Endothelial cell of umbilical vein (primary cell): ENCODE measurements at regions of chr19 and their contacts with region 1.

Region 1: DNA sequence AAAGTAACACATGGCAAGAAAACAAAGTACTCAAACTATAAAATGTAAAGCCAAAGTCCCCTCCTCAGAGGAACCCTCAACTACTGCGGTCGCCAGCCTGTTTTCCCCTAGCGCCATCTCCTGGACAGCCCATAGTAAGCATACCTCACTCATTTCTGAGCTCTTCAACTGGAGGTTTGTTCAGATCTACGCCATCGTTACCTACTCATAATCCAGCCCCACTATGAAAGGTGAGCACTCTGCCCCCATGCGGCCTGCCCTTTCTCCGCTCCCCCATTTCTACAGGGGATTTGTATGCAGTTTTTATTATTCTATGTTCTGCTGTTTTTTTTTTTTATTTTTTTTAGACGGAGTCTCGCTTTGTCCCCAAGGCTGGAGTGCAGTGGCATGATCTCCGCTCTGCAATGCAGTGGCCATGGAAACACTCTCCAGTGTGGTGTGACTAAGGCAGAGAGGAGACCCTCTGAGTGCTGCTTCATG is 26.2 kb downstream of the OPA3 start:
- DNase-seq: peak; percentile 46
- H3K4me3 ChIP-seq: no peak overlapping the region
- H3K27ac ChIP-seq: no peak overlapping the region
- H3K4me1 ChIP-seq: no peaks in the 10 kb centered on the region
- H3K27me3 ChIP-seq: no peaks in the 10 kb centered on the region
- CTCF ChIP-seq: peak; percentile 70 to 78
- POLR2A ChIP-seq: no peak

Region 2: DNA sequence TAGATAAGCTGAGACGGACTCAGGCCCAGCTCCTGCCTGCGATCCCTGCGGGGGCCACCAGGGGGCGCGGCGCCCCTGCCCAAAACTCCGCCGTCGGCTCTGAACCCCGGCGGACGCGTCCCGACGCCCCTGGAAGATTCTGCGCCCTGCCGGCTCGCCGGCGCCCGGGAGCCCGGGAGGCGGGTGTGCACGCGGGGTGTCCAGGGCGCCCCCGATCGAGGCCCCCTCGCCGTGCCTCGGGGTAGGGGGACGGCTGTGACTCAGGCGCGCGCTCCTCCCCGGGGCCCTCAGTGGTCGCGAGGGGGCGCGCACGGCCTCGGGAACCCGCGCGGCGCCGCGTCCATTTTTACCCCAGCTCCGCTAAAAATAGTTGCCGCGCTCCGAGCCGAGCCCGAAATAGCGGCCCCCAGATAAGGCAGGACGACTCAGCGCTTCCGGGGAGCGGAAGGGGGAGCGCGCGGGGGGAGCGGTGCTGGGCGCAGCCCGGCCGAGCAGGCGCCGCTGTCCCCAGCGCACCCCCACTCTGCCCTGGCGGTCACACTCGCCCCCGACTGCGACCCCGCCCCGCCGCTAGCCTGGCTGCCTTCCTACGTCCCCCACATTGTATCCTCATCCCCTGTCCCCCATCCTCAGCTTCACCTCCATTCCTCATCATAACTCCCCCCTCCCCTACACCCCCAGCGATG is 118.7 kb before region 1 on chr19:
- CTCF ChIA-PET with region 1: interaction called, 14 read pairs
- POLR2A ChIA-PET with region 1: no interaction called
- dilution Hi-C with region 1: no loop called
- intact Hi-C with region 1: no loop called
- DNase-seq: peak; percentile 65
- H3K4me3 ChIP-seq: peak overlapping the region; percentile 48 to 64 (median 52)
- H3K27ac ChIP-seq: peak overlapping the region; percentile 59
- H3K4me1 ChIP-seq: peaks cover 15% of the 10 kb centered on the region
- H3K27me3 ChIP-seq: no peaks in the 10 kb centered on the region
- CTCF ChIP-seq: peak; percentile 88 to 99
- POLR2A ChIP-seq: no peak

Region 3: GRCh38 chr19:45496349-45496953 is 62.0 kb before region 1 on chr19:
- CTCF ChIA-PET with region 1: interaction called, 18 read pairs
- POLR2A ChIA-PET with region 1: no interaction called
- dilution Hi-C with region 1: no loop called
- intact Hi-C with region 1: no loop called
- DNase-seq: peak; percentile 29
- H3K4me3 ChIP-seq: peak overlapping the region; percentile 31 to 55 (median 40)
- H3K27ac ChIP-seq: no peak overlapping the region
- H3K4me1 ChIP-seq: peaks cover 27% of the 10 kb centered on the region
- H3K27me3 ChIP-seq: peaks cover 8 to 16% of the 10 kb centered on the region in 2 experiments
- CTCF ChIP-seq: no peak
- POLR2A ChIP-seq: no peak

Region 4: DNA sequence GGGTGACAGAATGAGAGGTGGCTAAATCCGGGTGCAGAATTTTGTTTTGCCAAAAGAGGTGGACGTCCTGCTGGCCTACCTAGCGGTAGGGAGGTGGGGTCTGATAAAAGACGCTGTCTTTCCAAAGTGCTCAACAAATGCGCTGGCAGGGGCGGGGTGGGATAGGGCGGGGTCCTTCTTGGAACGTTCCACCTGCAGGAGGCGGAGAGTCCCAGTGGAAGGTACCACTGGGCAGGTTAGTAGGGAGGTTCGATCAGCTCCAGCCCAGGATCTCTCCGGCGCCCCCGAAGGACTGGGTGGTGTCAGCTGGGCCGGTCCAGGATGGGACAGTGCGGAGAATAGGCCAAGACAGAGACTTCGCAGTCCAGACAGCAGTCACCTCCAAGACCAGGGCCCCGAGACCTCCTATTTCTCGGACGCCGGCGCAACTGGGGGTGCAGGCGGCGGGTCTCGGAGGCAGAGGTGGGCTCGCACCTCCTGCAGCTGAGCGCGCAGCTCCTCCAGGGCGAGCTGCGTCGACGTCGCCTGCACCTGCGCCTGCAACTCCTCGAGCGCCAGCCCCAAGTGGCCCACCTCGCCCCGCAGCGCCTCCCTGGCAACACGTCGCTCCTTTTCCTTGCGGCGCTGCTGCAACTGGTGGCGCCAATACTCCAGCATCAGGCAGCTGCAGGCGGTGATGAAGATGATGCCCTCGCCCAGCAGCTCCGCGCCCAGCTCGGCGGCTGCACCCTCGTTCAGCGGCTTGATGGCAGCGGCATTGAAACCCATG is 29.6 kb before region 1 on chr19:
- CTCF ChIA-PET with region 1: interaction called, 21 read pairs
- POLR2A ChIA-PET with region 1: no interaction called
- dilution Hi-C with region 1: no loop called
- intact Hi-C with region 1: no loop called
- DNase-seq: no peak
- H3K4me3 ChIP-seq: no peak overlapping the region
- H3K27ac ChIP-seq: no peak overlapping the region
- H3K4me1 ChIP-seq: no peaks in the 10 kb centered on the region
- H3K27me3 ChIP-seq: no peaks in the 10 kb centered on the region
- CTCF ChIP-seq: no peak
- POLR2A ChIP-seq: peak; percentile 24

Region 5: DNA sequence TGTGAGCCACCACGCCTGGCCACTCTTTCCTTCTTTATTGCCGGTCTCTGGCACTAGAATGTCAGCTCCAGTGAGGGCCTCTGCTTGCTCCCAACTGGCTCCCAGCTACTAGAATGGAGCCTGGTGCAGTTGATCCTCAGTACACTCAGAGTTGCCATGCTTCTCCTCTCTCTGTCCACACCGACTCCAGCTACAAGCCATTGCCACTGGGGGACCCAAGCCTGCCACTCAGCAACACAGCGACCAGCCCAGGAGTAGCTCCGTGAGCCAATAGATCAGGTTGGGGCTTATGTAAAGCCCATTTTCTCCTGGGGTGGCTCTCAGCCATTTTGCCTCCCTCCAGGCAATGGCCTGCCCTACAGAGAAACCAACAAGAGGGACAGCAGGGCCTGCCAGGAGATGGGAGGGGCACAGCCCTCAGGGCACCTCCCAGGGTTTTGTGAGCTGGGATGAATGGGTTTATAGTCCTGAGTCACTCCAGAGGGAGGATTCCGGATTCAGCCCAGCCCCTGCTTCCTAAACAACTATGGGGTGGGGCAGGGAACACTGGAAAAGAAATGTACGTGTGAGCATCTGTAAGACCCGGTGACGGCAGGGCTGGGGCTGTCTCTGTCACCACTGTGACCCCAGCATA is 10.3 kb before region 1 on chr19:
- CTCF ChIA-PET with region 1: interaction called, 28 read pairs
- POLR2A ChIA-PET with region 1: no interaction called
- dilution Hi-C with region 1: no loop called
- intact Hi-C with region 1: no loop called
- DNase-seq: no peak
- H3K4me3 ChIP-seq: no peak overlapping the region
- H3K27ac ChIP-seq: no peak overlapping the region
- H3K4me1 ChIP-seq: no peaks in the 10 kb centered on the region
- H3K27me3 ChIP-seq: no peaks in the 10 kb centered on the region
- CTCF ChIP-seq: no peak
- POLR2A ChIP-seq: no peak

Region 6: GRCh38 chr19:45632468-45633196 is 74.2 kb after region 1 on chr19:
- CTCF ChIA-PET with region 1: interaction called, 10 read pairs
- POLR2A ChIA-PET with region 1: no interaction called
- dilution Hi-C with region 1: no loop called
- intact Hi-C with region 1: no loop called
- DNase-seq: peak; percentile 80
- H3K4me3 ChIP-seq: peak overlapping the region in 1 of 3 experiments; percentile 13
- H3K27ac ChIP-seq: no peak overlapping the region
- H3K4me1 ChIP-seq: peaks cover 8% of the 10 kb centered on the region
- H3K27me3 ChIP-seq: no peaks in the 10 kb centered on the region
- CTCF ChIP-seq: no peak
- POLR2A ChIP-seq: no peak